Aorta (tissue), 5 donors: ENCODE measurements at regions of chr10 and their contacts with region 1.

Region 1: GRCh38 chr10:69914398-69915214 is 112.9 kb downstream of the COL13A1 start:
- DNase-seq: peak; percentile 80 to 91
- ATAC-seq: peak; percentile 68
- H3K4me3 ChIP-seq: no peak overlapping the region
- H3K27ac ChIP-seq: no peak overlapping the region
- H3K4me1 ChIP-seq: peaks cover 0 to 2% of the 10 kb centered on the region in 2 donors
- H3K27me3 ChIP-seq: no peaks in the 10 kb centered on the region

Region 2: GRCh38 chr10:69515699-69516259 is 398.8 kb before region 1 on chr10:
- intact Hi-C with region 1: loop called in 1 of 2 experiments (anchors 5 kb)
- DNase-seq: peak; percentile 75 to 90
- ATAC-seq: peak; percentile 73
- H3K4me3 ChIP-seq: no peak overlapping the region
- H3K27ac ChIP-seq: no peak overlapping the region
- H3K4me1 ChIP-seq: no peaks in the 10 kb centered on the region
- H3K27me3 ChIP-seq: no peaks in the 10 kb centered on the region

Region 3: DNA sequence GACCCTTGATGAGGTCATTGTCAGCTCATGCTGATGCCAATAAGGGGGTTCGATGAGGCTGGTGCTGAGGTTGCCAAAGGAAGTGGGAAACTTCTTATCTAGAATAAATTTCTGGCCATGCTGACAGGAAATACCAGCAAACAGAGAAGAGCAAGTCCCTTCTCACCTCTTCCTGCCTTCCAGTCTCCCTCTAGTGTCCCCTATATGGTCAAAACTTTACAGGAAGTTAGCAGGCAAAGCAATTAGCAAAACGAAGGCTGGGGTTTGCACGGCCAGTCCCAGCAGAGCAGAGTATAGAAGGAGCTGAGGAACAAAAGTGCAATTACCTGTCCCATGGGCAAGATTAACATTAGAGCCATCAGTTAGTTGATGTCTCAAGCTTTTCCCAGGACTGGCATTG is 326.2 kb before region 1 on chr10:
- intact Hi-C with region 1: no loop called
- DNase-seq: no peak
- ATAC-seq: no peak
- H3K4me3 ChIP-seq: no peak overlapping the region
- H3K27ac ChIP-seq: no peak overlapping the region
- H3K4me1 ChIP-seq: no peaks in the 10 kb centered on the region
- H3K27me3 ChIP-seq: peaks cover 0 to 1% of the 10 kb centered on the region in 2 donors

Region 4: GRCh38 chr10:69644658-69645295 is 269.8 kb before region 1 on chr10:
- intact Hi-C with region 1: loop called (anchors 2 to 5 kb)
- DNase-seq: peak; percentile 72 to 89
- ATAC-seq: peak; percentile 56
- H3K4me3 ChIP-seq: no peak overlapping the region
- H3K27ac ChIP-seq: no peak overlapping the region
- H3K4me1 ChIP-seq: no peaks in the 10 kb centered on the region
- H3K27me3 ChIP-seq: no peaks in the 10 kb centered on the region

Region 5: GRCh38 chr10:69716711-69717560 is 197.7 kb before region 1 on chr10:
- intact Hi-C with region 1: loop called in 1 of 2 experiments (anchors 10 kb)
- DNase-seq: peak; percentile 67 to 84
- ATAC-seq: peak; percentile 42
- H3K4me3 ChIP-seq: no peak overlapping the region
- H3K27ac ChIP-seq: peak overlapping the region in 1 of 2 donors; percentile 94
- H3K4me1 ChIP-seq: no peaks in the 10 kb centered on the region
- H3K27me3 ChIP-seq: no peaks in the 10 kb centered on the region

Region 6: DNA sequence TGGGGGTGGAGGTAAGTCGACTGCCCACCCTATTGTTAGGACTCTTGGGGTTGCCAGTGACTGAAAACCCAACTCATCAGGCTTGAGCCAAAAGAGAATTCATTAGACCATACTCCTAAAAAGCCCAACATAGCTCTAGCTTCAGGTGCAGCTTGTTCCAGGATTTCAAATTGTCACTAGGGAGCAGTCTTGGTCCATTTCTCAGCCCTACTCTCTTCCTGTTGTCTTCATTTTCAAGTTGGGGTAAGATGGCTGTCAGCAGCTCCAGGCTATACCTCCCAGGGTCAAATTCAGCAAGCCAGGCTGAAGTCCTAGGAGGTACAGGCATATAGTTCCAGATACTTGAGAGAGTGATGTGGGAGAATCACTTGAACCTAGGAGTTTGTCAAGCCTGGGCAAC is 127.8 kb before region 1 on chr10:
- intact Hi-C with region 1: loop called in 1 of 2 experiments (anchors 5 kb)
- DNase-seq: no peak
- ATAC-seq: peak; percentile 47
- H3K4me3 ChIP-seq: no peak overlapping the region
- H3K27ac ChIP-seq: peak overlapping the region in 1 of 2 donors; percentile 54
- H3K4me1 ChIP-seq: peaks cover 2 to 7% of the 10 kb centered on the region in 2 donors
- H3K27me3 ChIP-seq: no peaks in the 10 kb centered on the region

Region 7: DNA sequence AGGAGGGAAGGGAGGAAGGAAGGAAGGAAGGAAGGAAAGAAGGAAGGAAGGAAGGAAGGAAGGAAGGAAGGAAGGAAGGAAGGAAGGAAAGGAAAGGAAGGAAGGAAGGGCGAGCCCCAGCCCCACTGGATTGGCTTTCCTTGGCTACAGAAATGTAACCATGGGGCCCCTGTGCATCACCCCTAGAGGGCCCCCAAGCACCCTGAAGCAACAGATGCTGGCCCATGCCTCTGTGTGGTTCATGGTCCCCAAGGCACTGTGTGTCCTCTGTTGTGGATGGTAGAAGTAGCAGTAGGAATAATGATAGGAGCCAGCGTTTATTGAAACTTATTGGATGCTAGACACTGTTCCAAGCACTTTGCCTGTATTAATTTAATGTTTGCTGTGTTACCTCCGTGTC is 21.5 kb after region 1 on chr10:
- intact Hi-C with region 1: no loop called
- DNase-seq: no peak
- ATAC-seq: no peak
- H3K4me3 ChIP-seq: no peak overlapping the region
- H3K27ac ChIP-seq: no peak overlapping the region
- H3K4me1 ChIP-seq: no peaks in the 10 kb centered on the region
- H3K27me3 ChIP-seq: no peaks in the 10 kb centered on the region